HCT116 (cell line): ENCODE measurements at regions of chr20 and their contacts with region 1.

Region 1: GRCh38 chr20:51767010-51767558 is 1.1 kb downstream of the ATP9A start:
- DNase-seq: peak; percentile 85
- ATAC-seq: peak; percentile 95
- H3K4me3 ChIP-seq: peak overlapping the region; percentile 74 to 88
- H3K27ac ChIP-seq: peak overlapping the region; percentile 89
- H3K4me1 ChIP-seq: peaks cover 23 to 47% of the 10 kb centered on the region in 2 experiments
- H3K27me3 ChIP-seq: no peaks in the 10 kb centered on the region
- CTCF ChIP-seq: no peak
- POLR2A ChIP-seq: peak; percentile 50
- RAD21 ChIP-seq: no peak

Region 2: DNA sequence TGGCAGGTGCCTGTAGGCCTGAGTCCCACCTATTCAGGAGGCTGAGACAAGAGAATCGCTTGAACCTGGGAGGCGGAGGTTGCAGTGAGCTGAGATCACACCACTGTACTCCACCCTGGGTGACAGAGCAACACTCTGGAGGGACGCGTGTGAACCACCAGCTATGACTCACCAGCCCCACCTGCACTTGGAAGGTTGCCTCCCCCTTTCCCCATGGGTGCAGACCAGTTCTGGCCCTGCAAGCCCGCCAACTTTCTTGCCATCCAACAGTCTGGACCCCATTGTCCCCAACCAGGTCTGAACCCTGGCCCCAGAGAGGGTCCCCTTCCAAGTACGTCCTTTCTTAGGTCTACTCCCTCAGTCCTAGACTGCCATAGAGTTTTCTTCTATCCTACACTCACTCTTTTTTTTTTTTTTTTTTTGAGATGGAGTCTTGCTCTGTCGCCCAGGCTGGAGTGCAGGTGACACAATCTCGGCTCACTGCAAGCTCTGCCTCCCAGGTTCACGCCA is 28.1 kb before region 1 on chr20:
- CTCF ChIA-PET with region 1: no interaction called
- POLR2A ChIA-PET with region 1: interaction called, 3 read pairs
- RAD21 ChIA-PET with region 1: no interaction called
- intact Hi-C with region 1: loop called (anchors 2 kb)
- DNase-seq: peak; percentile 80
- ATAC-seq: peak; percentile 82
- H3K4me3 ChIP-seq: peak overlapping the region; percentile 17 to 45
- H3K27ac ChIP-seq: peak overlapping the region; percentile 86
- H3K4me1 ChIP-seq: peaks cover 58 to 82% of the 10 kb centered on the region in 2 experiments
- H3K27me3 ChIP-seq: no peaks in the 10 kb centered on the region
- CTCF ChIP-seq: no peak
- POLR2A ChIP-seq: no peak
- RAD21 ChIP-seq: no peak

Region 3: GRCh38 chr20:52104546-52105441 is 337.7 kb after region 1 on chr20:
- CTCF ChIA-PET with region 1: no interaction called
- POLR2A ChIA-PET with region 1: no interaction called
- RAD21 ChIA-PET with region 1: no interaction called
- intact Hi-C with region 1: no loop called
- DNase-seq: no peak
- ATAC-seq: no peak
- H3K4me3 ChIP-seq: no peak overlapping the region
- H3K27ac ChIP-seq: no peak overlapping the region
- H3K4me1 ChIP-seq: no peaks in the 10 kb centered on the region
- H3K27me3 ChIP-seq: no peaks in the 10 kb centered on the region
- CTCF ChIP-seq: no peak
- POLR2A ChIP-seq: no peak
- RAD21 ChIP-seq: no peak

Region 4: GRCh38 chr20:52179331-52180179 is 412.5 kb after region 1 on chr20:
- CTCF ChIA-PET with region 1: no interaction called
- POLR2A ChIA-PET with region 1: no interaction called
- RAD21 ChIA-PET with region 1: no interaction called
- intact Hi-C with region 1: no loop called
- DNase-seq: no peak
- ATAC-seq: no peak
- H3K4me3 ChIP-seq: no peak overlapping the region
- H3K27ac ChIP-seq: no peak overlapping the region
- H3K4me1 ChIP-seq: no peaks in the 10 kb centered on the region
- H3K27me3 ChIP-seq: no peaks in the 10 kb centered on the region
- CTCF ChIP-seq: no peak
- POLR2A ChIP-seq: no peak
- RAD21 ChIP-seq: no peak